Heart right ventricle (tissue), 16 donors: ENCODE measurements at regions of chr14 and their contacts with region 1.

Region 1: GRCh38 chr14:49867831-49868723 is 15.5 kb upstream of the NEMF start:
- DNase-seq: peak; percentile 96 to 98
- ATAC-seq: peak; percentile 95 to 98 (median 97)
- H3K4me3 ChIP-seq: peak overlapping the region; percentile 22 to 75 (median 62)
- H3K27ac ChIP-seq: peak overlapping the region; percentile 75 to 97 (median 94)
- H3K4me1 ChIP-seq: peaks cover 0 to 56% (median 21%) of the 10 kb centered on the region in 9 donors
- H3K27me3 ChIP-seq: no peaks in the 10 kb centered on the region
- CTCF ChIP-seq: peak in 1 of 9 donors; percentile 4

Region 2: DNA sequence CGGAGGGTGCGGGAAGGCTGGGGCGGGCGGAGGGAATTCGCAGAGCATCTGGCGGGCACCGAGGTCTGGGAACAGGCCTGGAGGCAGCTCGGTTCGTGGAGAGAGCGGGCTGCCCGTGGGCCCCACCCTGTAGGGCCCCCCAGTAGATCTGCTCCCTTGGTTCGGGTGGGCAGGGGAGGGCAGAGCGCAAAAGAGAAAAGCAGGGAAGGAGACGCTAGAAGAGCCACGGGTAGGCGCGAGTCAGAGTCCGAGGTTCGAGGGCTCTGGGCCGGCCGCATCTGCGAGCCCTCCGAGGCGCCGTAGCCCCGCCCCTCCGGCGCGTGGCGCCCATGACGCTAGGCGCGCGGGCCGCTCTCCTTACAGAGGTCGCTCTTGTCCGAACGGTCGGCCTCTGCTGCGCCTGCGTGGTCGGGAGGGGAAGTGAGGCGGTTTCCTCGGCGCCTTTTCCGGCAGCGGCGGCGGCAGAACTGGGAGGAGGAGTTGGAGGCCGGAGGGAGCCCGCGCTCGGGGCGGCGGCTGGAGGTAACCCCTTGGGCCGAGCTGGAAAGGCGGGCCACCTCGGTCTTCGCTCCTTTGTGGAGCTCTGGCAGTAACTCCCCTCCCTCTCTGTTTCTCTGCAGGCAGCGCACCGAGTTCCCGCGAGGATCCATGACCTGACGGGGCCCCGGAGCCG is 24.7 kb after region 1 on chr14 and contains the start of gene ARF6:
- intact Hi-C with region 1: loop called in 4 of 10 experiments (anchors 1 to 2 kb)
- DNase-seq: peak; percentile 99 to 100
- ATAC-seq: peak; percentile 97 to 100 (median 99)
- H3K4me3 ChIP-seq: peak within 1 kb of the TSS; percentile 82 to 100 (median 94)
- H3K27ac ChIP-seq: peak within 1 kb of the TSS; percentile 98 to 100 (median 100)
- H3K4me1 ChIP-seq: peaks cover 7 to 45% (median 40%) of the 10 kb centered on the region in 9 donors
- H3K27me3 ChIP-seq: no peaks in the 10 kb centered on the region
- CTCF ChIP-seq: peak in 5 of 9 donors; percentile 9 to 45 (median 28)
- total RNA-seq, gene ARF6: 19.0 to 40.5 (median 25.5) TPM

Region 3: DNA sequence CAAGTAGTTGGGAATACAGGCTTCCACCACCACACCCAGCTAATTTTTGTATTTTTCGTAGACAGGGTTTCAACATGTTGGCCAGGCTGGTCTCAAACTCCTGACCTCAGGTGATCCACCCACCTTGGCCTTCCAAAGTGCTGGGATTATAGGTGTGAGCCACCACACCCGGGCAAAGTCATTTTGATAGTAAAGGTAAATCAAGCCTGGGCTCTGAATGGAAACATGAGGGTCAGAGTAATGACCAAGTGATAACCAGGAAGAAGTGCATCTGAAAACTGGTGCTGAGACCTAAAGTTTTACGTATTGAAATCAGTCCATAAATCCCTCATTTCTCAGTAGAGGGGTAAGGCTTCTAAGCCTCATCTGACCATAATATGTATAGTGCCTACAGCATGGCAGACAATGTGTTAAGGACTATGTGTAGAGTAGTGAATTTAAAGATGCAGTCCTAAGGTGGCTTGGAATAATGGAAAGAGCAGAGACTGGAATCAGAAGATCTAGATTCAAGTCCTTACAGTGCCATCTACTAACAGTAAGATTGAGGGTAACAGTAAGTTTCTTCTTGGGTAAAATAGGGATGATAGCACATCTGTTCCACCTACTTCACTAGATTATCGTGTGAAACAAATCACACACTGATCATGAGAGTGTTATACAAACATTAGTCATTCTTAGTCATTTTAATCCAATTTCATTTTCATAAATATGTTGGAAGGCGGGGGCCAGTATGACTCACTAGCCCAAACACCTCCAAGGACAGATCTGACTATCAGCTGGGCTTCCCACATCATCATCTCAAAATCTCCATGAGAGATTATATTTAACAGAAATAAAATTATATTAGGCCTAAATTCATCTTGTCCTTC is 653.1 kb after region 1 on chr14:
- intact Hi-C with region 1: loop called in 1 of 10 experiments (anchors 10 kb)
- DNase-seq: no peak
- ATAC-seq: peak in 4 of 8 donors; percentile 53 to 86 (median 58)
- H3K4me3 ChIP-seq: no peak overlapping the region
- H3K27ac ChIP-seq: peak overlapping the region in 4 of 10 donors; percentile 0 to 53 (median 24)
- H3K4me1 ChIP-seq: peaks cover 0 to 42% (median 20%) of the 10 kb centered on the region in 9 donors
- H3K27me3 ChIP-seq: no peaks in the 10 kb centered on the region
- CTCF ChIP-seq: no peak